ENCODE measurements at regions of chr3 and their contacts with region 1.

Region 1: GRCh38 chr3:154273381-154273780 is 50.9 kb downstream of the DHX36 start:
- DNase-seq: no peak
- ATAC-seq: no peak
- H3K4me3 ChIP-seq: no peak overlapping the region
- H3K4me3 Mint-ChIP-seq: no peak overlapping the region
- H3K27ac ChIP-seq: no peak overlapping the region
- H3K27ac Mint-ChIP-seq: no peak overlapping the region
- H3K4me1 ChIP-seq: no peaks in the 10 kb centered on the region
- H3K4me1 Mint-ChIP-seq: peaks cover 0 to 6% (median 1%) of the 10 kb centered on the region in 3 donors
- H3K27me3 ChIP-seq: no peaks in the 10 kb centered on the region
- H3K27me3 Mint-ChIP-seq: no peaks in the 10 kb centered on the region

Region 2: GRCh38 chr3:153848702-153849101 is 424.7 kb before region 1 on chr3:
- CTCF ChIA-PET with region 1: no interaction called
- POLR2A ChIA-PET with region 1: no interaction called
- DNase-seq: no peak
- ATAC-seq: no peak
- H3K4me3 ChIP-seq: no peak overlapping the region
- H3K4me3 Mint-ChIP-seq: no peak overlapping the region
- H3K27ac ChIP-seq: no peak overlapping the region
- H3K27ac Mint-ChIP-seq: no peak overlapping the region
- H3K4me1 ChIP-seq: no peaks in the 10 kb centered on the region
- H3K4me1 Mint-ChIP-seq: no peaks in the 10 kb centered on the region
- H3K27me3 ChIP-seq: no peaks in the 10 kb centered on the region
- H3K27me3 Mint-ChIP-seq: peaks cover 2 to 4% of the 10 kb centered on the region in 2 donors

Region 3: GRCh38 chr3:154301571-154301970 is 28.2 kb after region 1 on chr3:
- CTCF ChIA-PET with region 1: interaction called in 1 of 2 experiments, 3 read pairs
- POLR2A ChIA-PET with region 1: interaction called in 1 of 2 experiments, 11 read pairs
- DNase-seq: no peak
- ATAC-seq: no peak
- H3K4me3 ChIP-seq: no peak overlapping the region
- H3K4me3 Mint-ChIP-seq: no peak overlapping the region
- H3K27ac ChIP-seq: no peak overlapping the region
- H3K27ac Mint-ChIP-seq: no peak overlapping the region
- H3K4me1 ChIP-seq: no peaks in the 10 kb centered on the region
- H3K4me1 Mint-ChIP-seq: peaks cover 0 to 7% (median 3%) of the 10 kb centered on the region in 3 donors
- H3K27me3 ChIP-seq: no peaks in the 10 kb centered on the region
- H3K27me3 Mint-ChIP-seq: no peaks in the 10 kb centered on the region

Region 4: GRCh38 chr3:154749514-154749913 is 476.1 kb after region 1 on chr3:
- CTCF ChIA-PET with region 1: no interaction called
- POLR2A ChIA-PET with region 1: no interaction called
- DNase-seq: no peak
- ATAC-seq: no peak
- H3K4me3 ChIP-seq: no peak overlapping the region
- H3K4me3 Mint-ChIP-seq: no peak overlapping the region
- H3K27ac ChIP-seq: no peak overlapping the region
- H3K27ac Mint-ChIP-seq: no peak overlapping the region
- H3K4me1 ChIP-seq: no peaks in the 10 kb centered on the region
- H3K4me1 Mint-ChIP-seq: no peaks in the 10 kb centered on the region
- H3K27me3 ChIP-seq: no peaks in the 10 kb centered on the region
- H3K27me3 Mint-ChIP-seq: no peaks in the 10 kb centered on the region

Measured in T-cell (primary cell).